RWPE1 (cell line): ENCODE measurements at regions of chr19 and their contacts with region 1.

Region 1: GRCh38 chr19:12647490-12648071 is 19.0 kb downstream of the MAN2B1 start:
- DNase-seq: peak; percentile 74
- H3K27ac ChIP-seq: no peak overlapping the region
- CTCF ChIP-seq: no peak

Region 2: DNA sequence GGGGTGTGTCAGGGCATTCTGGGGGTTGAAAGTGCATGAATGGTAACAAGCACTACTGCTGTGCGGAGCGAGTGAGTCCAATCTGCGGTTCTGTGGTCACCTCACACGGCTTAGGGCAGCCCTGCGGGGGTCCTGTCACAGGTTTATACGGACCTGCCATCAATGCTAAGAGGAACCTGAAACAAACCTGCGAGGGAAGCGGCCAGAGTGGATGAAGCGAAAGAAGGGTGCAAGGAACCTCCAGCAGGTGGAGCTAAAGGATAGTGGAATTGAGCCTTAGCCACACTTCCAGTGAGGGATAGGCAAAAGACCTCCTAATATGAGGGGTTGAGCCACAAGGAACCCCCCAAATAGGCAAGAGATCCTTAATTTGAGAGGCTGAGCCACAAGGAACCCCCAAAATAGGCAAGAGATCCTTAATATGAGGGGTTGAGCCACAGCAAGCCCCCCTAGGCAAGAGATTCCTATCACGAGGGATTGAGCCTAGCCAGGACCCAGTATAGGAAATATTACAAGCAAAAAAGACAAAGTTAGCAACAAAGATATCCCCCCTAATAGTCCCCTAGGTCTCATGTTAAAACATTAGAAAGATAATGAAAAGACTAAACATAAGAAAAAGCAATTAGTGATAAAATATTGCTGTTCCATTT is 766.3 kb before region 1 on chr19:
- CTCF ChIA-PET with region 1: no interaction called
- POLR2A ChIA-PET with region 1: interaction called, 10 read pairs
- DNase-seq: peak; percentile 46
- H3K27ac ChIP-seq: no peak overlapping the region
- CTCF ChIP-seq: peak; percentile 70

Region 3: GRCh38 chr19:12364391-12365235 is 283.0 kb before region 1 on chr19:
- CTCF ChIA-PET with region 1: interaction called, 13 read pairs
- POLR2A ChIA-PET with region 1: no interaction called
- DNase-seq: peak; percentile 8
- H3K27ac ChIP-seq: peak overlapping the region; percentile 84
- CTCF ChIP-seq: no peak

Region 4: DNA sequence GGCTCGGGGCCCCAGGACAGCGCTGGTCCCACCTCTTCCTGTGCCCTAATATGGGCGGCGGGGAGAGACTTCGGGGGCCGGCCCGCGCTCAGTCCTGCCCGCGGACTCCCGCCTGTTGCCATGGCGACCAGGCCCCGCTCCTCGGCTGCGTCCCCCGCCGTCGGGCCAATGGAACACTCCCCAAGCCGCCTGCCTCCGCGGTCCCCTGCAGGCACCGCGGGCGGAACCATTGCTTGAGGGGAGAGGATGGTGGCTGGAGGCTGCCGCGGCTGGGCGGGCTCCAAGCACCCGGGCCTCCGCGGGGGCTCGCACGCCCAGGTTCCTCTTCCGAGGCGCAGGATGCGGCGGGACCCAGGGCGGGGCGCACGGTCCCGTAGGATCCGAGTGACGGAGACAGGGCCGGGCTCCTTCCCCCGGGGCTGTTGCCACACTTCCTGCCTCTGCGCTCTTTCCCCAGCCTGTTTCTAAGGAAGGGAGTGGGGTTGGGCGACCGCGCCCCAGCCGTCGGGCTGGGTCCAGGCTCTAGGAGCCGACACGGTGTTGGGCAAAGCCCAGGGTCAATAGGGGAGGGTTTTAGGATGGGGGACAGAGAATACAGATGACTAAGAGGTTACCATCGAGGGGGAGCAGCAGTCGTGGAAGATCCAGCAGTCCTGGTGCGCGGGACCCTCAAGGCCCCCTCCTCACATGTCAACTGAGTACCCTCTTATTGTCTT is 142.5 kb after region 1 on chr19:
- CTCF ChIA-PET with region 1: no interaction called
- POLR2A ChIA-PET with region 1: no interaction called
- DNase-seq: peak; percentile 93
- H3K27ac ChIP-seq: peak overlapping the region; percentile 100
- CTCF ChIP-seq: no peak